ENCODE measurements at regions of chr4 and their contacts with region 1.

Region 1: DNA sequence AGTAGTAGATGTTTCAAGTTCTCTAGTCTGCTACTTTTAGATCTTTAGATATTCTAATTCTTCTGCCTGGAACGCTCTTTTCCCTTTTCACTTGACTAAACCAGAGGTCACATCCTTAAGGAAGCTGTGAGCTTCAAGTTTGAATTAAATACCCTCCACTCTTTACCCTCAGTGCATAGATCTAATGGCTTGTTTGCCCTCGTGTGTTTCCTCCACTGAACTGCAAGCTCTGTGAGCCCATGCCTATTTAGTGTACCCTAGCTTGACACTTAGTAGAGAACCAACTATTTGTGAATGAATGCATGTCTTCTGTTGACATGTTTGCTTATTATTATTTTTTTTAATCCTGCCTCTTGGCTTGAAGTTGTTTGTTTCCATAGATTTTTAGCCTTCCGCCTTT is 138.3 kb downstream of the PDE5A start:
- DNase-seq: no peak
- H3K4me3 Mint-ChIP-seq: no peak overlapping the region
- H3K27ac Mint-ChIP-seq: no peak overlapping the region
- H3K4me1 Mint-ChIP-seq: no peaks in the 10 kb centered on the region
- H3K27me3 Mint-ChIP-seq: no peaks in the 10 kb centered on the region

Region 2: GRCh38 chr4:119314356-119314755 is 176.0 kb before region 1 on chr4:
- intact Hi-C with region 1: loop called (anchors 10 kb)
- DNase-seq: peak; percentile 79
- H3K4me3 Mint-ChIP-seq: no peak overlapping the region
- H3K27ac Mint-ChIP-seq: no peak overlapping the region
- H3K4me1 Mint-ChIP-seq: no peaks in the 10 kb centered on the region
- H3K27me3 Mint-ChIP-seq: peaks cover 13% of the 10 kb centered on the region

Region 3: GRCh38 chr4:119478446-119479179 is 11.7 kb before region 1 on chr4:
- intact Hi-C with region 1: no loop called
- DNase-seq: no peak
- H3K4me3 Mint-ChIP-seq: no peak overlapping the region
- H3K27ac Mint-ChIP-seq: no peak overlapping the region
- H3K4me1 Mint-ChIP-seq: no peaks in the 10 kb centered on the region
- H3K27me3 Mint-ChIP-seq: no peaks in the 10 kb centered on the region

Region 4: GRCh38 chr4:119570401-119570800 is 80.1 kb after region 1 on chr4:
- intact Hi-C with region 1: no loop called
- DNase-seq: no peak
- H3K4me3 Mint-ChIP-seq: no peak overlapping the region
- H3K27ac Mint-ChIP-seq: no peak overlapping the region
- H3K4me1 Mint-ChIP-seq: no peaks in the 10 kb centered on the region
- H3K27me3 Mint-ChIP-seq: no peaks in the 10 kb centered on the region

Measured in activated CD4-positive, alpha-beta T cell treated with anti-CD3 and anti-CD28 coated beads, Interleukin-2, amount 10 ng/mL, durations not matched to agents 24 days and 14 days (primary cell).